ENCODE measurements at regions of chr12 and their contacts with region 1.

Region 1: GRCh38 chr12:48454667-48455066 is 17.7 kb upstream of the ANP32D start:
- DNase-seq: no peak
- ATAC-seq: no peak
- H3K4me3 Mint-ChIP-seq: no peak overlapping the region
- H3K27ac Mint-ChIP-seq: no peak overlapping the region
- H3K4me1 Mint-ChIP-seq: no peaks in the 10 kb centered on the region
- H3K27me3 Mint-ChIP-seq: peaks cover 8% of the 10 kb centered on the region

Region 2: GRCh38 chr12:48286665-48287064 is 168.0 kb before region 1 on chr12:
- CTCF ChIA-PET with region 1: interaction called, 3 read pairs
- POLR2A ChIA-PET with region 1: no interaction called
- intact Hi-C with region 1: loop called in 1 of 2 experiments (anchors 10 kb)
- DNase-seq: peak; percentile 30
- ATAC-seq: peak; percentile 49
- H3K4me3 Mint-ChIP-seq: no peak overlapping the region
- H3K27ac Mint-ChIP-seq: no peak overlapping the region
- H3K4me1 Mint-ChIP-seq: peaks cover 12% of the 10 kb centered on the region
- H3K27me3 Mint-ChIP-seq: no peaks in the 10 kb centered on the region

Region 3: GRCh38 chr12:49161092-49161795 is 706.6 kb after region 1 on chr12:
- CTCF ChIA-PET with region 1: no interaction called
- POLR2A ChIA-PET with region 1: no interaction called
- intact Hi-C with region 1: no loop called
- DNase-seq: no peak
- ATAC-seq: no peak
- H3K4me3 Mint-ChIP-seq: no peak overlapping the region
- H3K27ac Mint-ChIP-seq: no peak overlapping the region
- H3K4me1 Mint-ChIP-seq: no peaks in the 10 kb centered on the region
- H3K27me3 Mint-ChIP-seq: no peaks in the 10 kb centered on the region

Measured in activated CD4-positive, alpha-beta T cell treated with anti-CD3 and anti-CD28 coated beads for 36 hours (primary cell).